ENCODE measurements at regions of chr1 and their contacts with region 1.

Region 1: GRCh38 chr1:39609618-39610331 is 29.7 kb downstream of the HEYL start:
- DNase-seq: peak; percentile 30
- H3K4me3 ChIP-seq: no peak overlapping the region
- H3K27ac ChIP-seq: no peak overlapping the region
- H3K4me1 ChIP-seq: no peaks in the 10 kb centered on the region
- H3K27me3 ChIP-seq: peaks cover 0 to 5% of the 10 kb centered on the region in 2 experiments
- CTCF ChIP-seq: peak; percentile 88 to 93
- POLR2A ChIP-seq: no peak

Region 2: DNA sequence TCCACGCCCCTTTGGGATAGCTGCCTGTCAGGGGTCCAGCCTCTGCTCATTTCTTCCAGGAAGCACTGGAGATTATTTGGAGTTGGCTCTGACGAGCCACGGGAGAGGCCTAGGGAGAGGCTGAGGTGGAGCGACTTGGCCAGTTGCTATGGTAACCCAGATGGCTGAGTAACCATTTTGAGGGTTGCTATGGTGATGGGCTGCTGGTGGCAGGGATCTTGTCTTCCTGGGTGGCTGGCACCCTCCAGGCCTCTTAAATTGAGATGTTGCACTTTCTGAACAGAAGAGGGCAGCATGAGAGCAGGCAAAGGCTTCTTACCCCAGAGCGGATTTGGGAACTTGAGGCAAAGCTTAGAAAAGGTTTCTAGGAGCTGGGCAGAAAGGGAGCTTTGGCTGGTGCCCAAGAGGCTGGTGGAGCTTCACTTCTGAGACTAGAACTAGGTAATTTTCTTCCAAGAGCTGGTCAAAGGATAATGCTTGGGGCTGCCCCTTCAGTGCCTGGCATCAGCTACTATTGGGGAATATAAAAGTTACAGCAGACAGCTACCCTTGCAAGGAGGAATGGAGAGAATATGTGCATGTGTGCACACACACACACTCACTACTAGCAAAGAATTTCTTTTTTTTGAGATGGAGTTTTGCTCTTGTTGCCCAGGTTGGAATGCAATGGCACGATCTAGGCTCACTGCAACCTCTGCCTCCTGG is 511.1 kb before region 1 on chr1:
- CTCF ChIA-PET with region 1: interaction called, 10 read pairs
- POLR2A ChIA-PET with region 1: no interaction called
- dilution Hi-C with region 1: no loop called
- intact Hi-C with region 1: no loop called
- DNase-seq: peak; percentile 61
- H3K4me3 ChIP-seq: no peak overlapping the region
- H3K27ac ChIP-seq: no peak overlapping the region
- H3K4me1 ChIP-seq: peaks cover 12% of the 10 kb centered on the region
- H3K27me3 ChIP-seq: no peaks in the 10 kb centered on the region
- CTCF ChIP-seq: peak; percentile 65 to 68
- POLR2A ChIP-seq: no peak

Region 3: GRCh38 chr1:39326832-39327231 is 282.9 kb before region 1 on chr1:
- CTCF ChIA-PET with region 1: no interaction called
- POLR2A ChIA-PET with region 1: no interaction called
- dilution Hi-C with region 1: no loop called
- intact Hi-C with region 1: no loop called
- DNase-seq: no peak
- H3K4me3 ChIP-seq: no peak overlapping the region
- H3K27ac ChIP-seq: no peak overlapping the region
- H3K4me1 ChIP-seq: no peaks in the 10 kb centered on the region
- H3K27me3 ChIP-seq: no peaks in the 10 kb centered on the region
- CTCF ChIP-seq: no peak
- POLR2A ChIP-seq: no peak

Region 4: GRCh38 chr1:39632682-39633417 is 23.1 kb after region 1 on chr1:
- CTCF ChIA-PET with region 1: interaction called, 19 read pairs
- POLR2A ChIA-PET with region 1: interaction called, 5 read pairs
- dilution Hi-C with region 1: no loop called
- intact Hi-C with region 1: no loop called
- DNase-seq: peak; percentile 38
- H3K4me3 ChIP-seq: no peak overlapping the region
- H3K27ac ChIP-seq: no peak overlapping the region
- H3K4me1 ChIP-seq: no peaks in the 10 kb centered on the region
- H3K27me3 ChIP-seq: peaks cover 59 to 70% of the 10 kb centered on the region in 2 experiments
- CTCF ChIP-seq: no peak
- POLR2A ChIP-seq: no peak

Region 5: GRCh38 chr1:39653546-39654031 is 43.8 kb after region 1 on chr1:
- CTCF ChIA-PET with region 1: interaction called, 440 read pairs
- POLR2A ChIA-PET with region 1: no interaction called
- dilution Hi-C with region 1: no loop called
- intact Hi-C with region 1: loop called (anchors 1 kb)
- DNase-seq: peak; percentile 73
- H3K4me3 ChIP-seq: no peak overlapping the region
- H3K27ac ChIP-seq: no peak overlapping the region
- H3K4me1 ChIP-seq: no peaks in the 10 kb centered on the region
- H3K27me3 ChIP-seq: peaks cover 9 to 10% of the 10 kb centered on the region in 2 experiments
- CTCF ChIP-seq: peak; percentile 85 to 90
- POLR2A ChIP-seq: no peak

Region 6: GRCh38 chr1:39701049-39701439 is 91.3 kb after region 1 on chr1:
- CTCF ChIA-PET with region 1: interaction called, 12 read pairs
- POLR2A ChIA-PET with region 1: no interaction called
- dilution Hi-C with region 1: no loop called
- intact Hi-C with region 1: no loop called
- DNase-seq: no peak
- H3K4me3 ChIP-seq: no peak overlapping the region
- H3K27ac ChIP-seq: no peak overlapping the region
- H3K4me1 ChIP-seq: no peaks in the 10 kb centered on the region
- H3K27me3 ChIP-seq: peaks cover 31 to 39% of the 10 kb centered on the region in 2 experiments
- CTCF ChIP-seq: no peak
- POLR2A ChIP-seq: no peak

Region 7: GRCh38 chr1:39729030-39729429 is 119.3 kb after region 1 on chr1:
- CTCF ChIA-PET with region 1: interaction called, 14 read pairs
- POLR2A ChIA-PET with region 1: no interaction called
- dilution Hi-C with region 1: no loop called
- intact Hi-C with region 1: no loop called
- DNase-seq: no peak
- H3K4me3 ChIP-seq: no peak overlapping the region
- H3K27ac ChIP-seq: no peak overlapping the region
- H3K4me1 ChIP-seq: peaks cover 5% of the 10 kb centered on the region
- H3K27me3 ChIP-seq: peaks cover 48 to 80% of the 10 kb centered on the region in 2 experiments
- CTCF ChIP-seq: no peak
- POLR2A ChIP-seq: no peak

Region 8: GRCh38 chr1:39779137-39779536 is 169.4 kb after region 1 on chr1:
- CTCF ChIA-PET with region 1: no interaction called
- POLR2A ChIA-PET with region 1: no interaction called
- dilution Hi-C with region 1: no loop called
- intact Hi-C with region 1: no loop called
- DNase-seq: no peak
- H3K4me3 ChIP-seq: no peak overlapping the region
- H3K27ac ChIP-seq: no peak overlapping the region
- H3K4me1 ChIP-seq: no peaks in the 10 kb centered on the region
- H3K27me3 ChIP-seq: peaks cover 0 to 3% of the 10 kb centered on the region in 2 experiments
- CTCF ChIP-seq: no peak
- POLR2A ChIP-seq: no peak